CD14-positive monocyte (primary cell): ENCODE measurements at regions of chr12 and their contacts with region 1.

Region 1: DNA sequence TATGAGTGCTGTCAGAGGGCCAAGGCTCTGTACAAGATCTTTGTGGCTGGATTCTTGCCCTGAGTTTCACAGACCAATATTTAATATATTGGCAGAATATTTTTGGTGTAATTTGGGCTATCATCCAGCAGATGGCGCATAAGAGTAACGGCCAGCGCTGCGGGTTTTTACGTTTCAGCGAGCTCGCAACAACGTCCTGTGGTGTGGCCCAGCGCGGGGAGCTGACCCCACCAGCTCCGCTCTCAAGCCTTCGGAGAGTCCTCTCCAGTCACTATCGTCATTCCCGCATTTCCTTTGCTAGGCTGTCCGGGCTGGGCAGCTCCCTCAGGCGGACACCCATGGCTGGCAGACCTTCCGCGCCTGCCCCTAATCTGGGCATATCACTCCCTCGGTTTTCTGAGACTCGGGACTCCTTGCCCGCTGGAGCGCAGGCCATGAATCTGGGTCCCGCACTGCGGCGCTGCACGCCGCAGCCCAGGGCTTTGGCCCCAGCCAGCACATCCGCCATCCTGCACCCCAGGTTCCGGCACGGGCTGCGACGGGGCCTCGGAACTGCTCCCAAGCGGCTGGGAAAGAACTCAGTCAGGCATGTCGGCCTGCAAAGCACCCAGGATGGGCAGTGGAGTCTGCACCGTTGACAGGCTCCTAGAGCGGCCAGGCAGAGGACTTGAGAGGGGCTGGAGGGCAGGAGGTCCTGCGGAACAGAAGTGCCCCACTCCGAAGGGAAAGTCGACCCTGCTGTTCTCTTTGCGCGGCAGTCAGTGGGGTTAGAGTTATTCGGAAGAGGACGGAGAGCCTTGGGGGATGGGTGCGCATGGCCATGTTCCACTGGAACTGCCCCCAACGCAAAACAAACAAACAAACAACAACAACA is 18.4 kb downstream of the OLR1 start:
- DNase-seq: peak; percentile 80 to 86 (median 83)
- H3K4me3 ChIP-seq: peak overlapping the region; percentile 37 to 83 (median 55)
- H3K4me3 Mint-ChIP-seq: peak overlapping the region; percentile 88 to 93
- H3K27ac ChIP-seq: peak overlapping the region; percentile 86
- H3K27ac Mint-ChIP-seq: peak overlapping the region; percentile 94 to 99 (median 98)
- H3K4me1 ChIP-seq: peaks cover 13 to 24% of the 10 kb centered on the region in 2 donors
- H3K4me1 Mint-ChIP-seq: peaks cover 22% of the 10 kb centered on the region
- H3K27me3 ChIP-seq: no peaks in the 10 kb centered on the region
- H3K27me3 Mint-ChIP-seq: peaks cover 0 to 2% (median 2%) of the 10 kb centered on the region in 3 donors
- CTCF ChIP-seq: peak; percentile 77

Region 2: GRCh38 chr12:9948606-9949296 is 204.8 kb before region 1 on chr12:
- intact Hi-C with region 1: no loop called
- DNase-seq: peak; percentile 72 to 87 (median 83)
- H3K4me3 ChIP-seq: peak overlapping the region in 1 of 3 experiments; percentile 57
- H3K4me3 Mint-ChIP-seq: peak overlapping the region in 1 of 2 donors; percentile 2
- H3K27ac ChIP-seq: peak overlapping the region; percentile 22 to 80
- H3K27ac Mint-ChIP-seq: peak overlapping the region; percentile 82 to 91 (median 85)
- H3K4me1 ChIP-seq: peaks cover 63 to 79% of the 10 kb centered on the region in 2 donors
- H3K4me1 Mint-ChIP-seq: peaks cover 72% of the 10 kb centered on the region
- H3K27me3 ChIP-seq: no peaks in the 10 kb centered on the region
- H3K27me3 Mint-ChIP-seq: peaks cover 0 to 3% (median 0%) of the 10 kb centered on the region in 3 donors
- CTCF ChIP-seq: no peak

Region 3: GRCh38 chr12:10170292-10170691 is 16.8 kb after region 1 on chr12:
- intact Hi-C with region 1: loop called in 1 of 2 experiments (anchors 2 kb)
- DNase-seq: no peak
- H3K4me3 ChIP-seq: peak overlapping the region in 1 of 3 experiments; percentile 58
- H3K4me3 Mint-ChIP-seq: peak overlapping the region in 1 of 2 donors; percentile 60
- H3K27ac ChIP-seq: no peak overlapping the region
- H3K27ac Mint-ChIP-seq: peak overlapping the region in 4 of 7 donors; percentile 16 to 79 (median 34)
- H3K4me1 ChIP-seq: peaks cover 50% of the 10 kb centered on the region in 2 donors
- H3K4me1 Mint-ChIP-seq: peaks cover 50% of the 10 kb centered on the region
- H3K27me3 ChIP-seq: no peaks in the 10 kb centered on the region
- H3K27me3 Mint-ChIP-seq: no peaks in the 10 kb centered on the region
- CTCF ChIP-seq: no peak

Region 4: DNA sequence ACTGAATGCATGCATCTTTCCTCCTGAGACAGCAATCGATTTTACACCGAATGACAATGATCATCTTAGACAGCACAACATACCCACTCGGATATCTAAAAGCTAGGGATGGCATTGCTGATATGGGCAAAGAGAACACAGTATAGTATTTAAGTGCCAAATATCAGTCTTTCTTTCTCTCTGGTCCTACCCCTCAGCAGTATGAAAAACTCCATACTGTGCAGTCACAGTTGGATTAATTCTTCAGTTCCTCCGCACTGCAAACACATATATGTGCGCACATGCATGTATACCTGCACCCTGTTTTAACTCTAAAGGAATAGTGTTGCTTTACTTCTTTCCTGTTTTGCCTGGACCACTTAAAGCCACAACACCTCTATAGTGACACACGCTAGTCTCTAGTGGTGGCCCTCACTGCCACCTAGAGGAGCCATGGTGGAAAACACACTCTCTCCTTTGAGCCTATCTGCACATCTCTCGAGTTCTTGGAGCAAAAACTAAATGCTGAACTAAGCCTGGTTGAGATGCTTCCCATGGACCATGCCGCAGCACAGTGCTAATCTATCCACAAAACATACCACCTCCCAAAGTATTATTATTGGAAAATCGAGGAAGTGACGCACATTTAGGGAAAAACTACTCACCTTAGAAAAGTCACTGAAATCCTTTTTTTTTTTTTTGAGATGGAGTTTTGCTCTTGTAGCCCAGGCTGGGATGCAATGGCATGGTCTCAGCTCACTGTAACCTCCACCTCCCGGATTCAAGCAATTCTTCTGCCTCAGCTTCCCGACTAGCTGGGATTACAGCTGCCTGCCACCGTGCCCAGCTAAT is 37.3 kb after region 1 on chr12:
- intact Hi-C with region 1: loop called (anchors 2 kb)
- DNase-seq: peak; percentile 68 to 85 (median 77)
- H3K4me3 ChIP-seq: no peak overlapping the region
- H3K4me3 Mint-ChIP-seq: no peak overlapping the region
- H3K27ac ChIP-seq: no peak overlapping the region
- H3K27ac Mint-ChIP-seq: peak overlapping the region in 1 of 7 donors; percentile 73
- H3K4me1 ChIP-seq: peaks cover 16% of the 10 kb centered on the region in 2 donors
- H3K4me1 Mint-ChIP-seq: peaks cover 25% of the 10 kb centered on the region
- H3K27me3 ChIP-seq: peaks cover 0 to 6% of the 10 kb centered on the region in 2 donors
- H3K27me3 Mint-ChIP-seq: peaks cover 4 to 6% (median 5%) of the 10 kb centered on the region in 3 donors
- CTCF ChIP-seq: peak; percentile 87

Region 5: DNA sequence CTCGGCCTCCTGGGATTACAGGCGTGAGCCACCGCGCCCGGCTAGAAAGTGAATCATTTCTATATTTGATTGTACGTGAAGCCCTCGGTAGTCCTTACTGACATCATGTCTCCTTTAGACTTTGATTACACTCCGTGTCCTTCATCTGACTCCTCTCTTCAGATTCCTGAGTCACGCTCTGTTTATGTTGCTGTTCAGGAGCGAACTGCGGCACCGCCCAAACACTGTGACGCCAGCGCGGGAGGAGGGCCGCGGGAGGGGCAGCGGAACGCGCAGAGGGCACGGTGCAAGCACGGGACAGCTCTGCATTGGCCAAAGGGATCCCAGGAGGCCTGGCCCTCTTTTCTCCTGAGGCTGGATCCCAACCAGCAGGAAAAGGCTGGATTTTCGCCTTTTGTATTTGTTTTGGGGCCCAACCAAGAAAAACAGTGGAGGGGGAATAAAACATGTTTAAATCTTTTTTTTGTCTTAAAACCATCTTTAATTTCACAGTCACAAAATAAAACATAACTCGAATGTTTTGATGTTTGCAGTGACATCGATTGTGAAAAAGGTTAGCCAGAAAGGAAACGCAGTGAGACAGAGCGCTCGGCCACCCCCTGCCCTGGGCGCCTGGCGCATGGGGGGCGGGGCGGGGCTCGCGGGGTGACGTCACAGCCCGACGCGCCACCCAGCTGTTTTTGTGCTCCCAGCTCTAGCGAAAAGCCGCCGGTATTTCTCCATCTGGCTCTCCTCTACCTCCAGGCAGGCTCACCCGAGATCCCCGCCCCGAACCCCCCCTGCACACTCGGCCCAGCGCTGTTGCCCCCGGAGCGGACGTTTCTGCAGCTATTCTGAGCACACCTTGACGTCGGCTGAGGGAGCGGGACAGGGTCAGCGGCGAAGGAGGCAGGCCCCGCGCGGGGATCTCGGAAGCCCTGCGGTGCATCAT is 59.0 kb after region 1 on chr12 and contains the start of gene GABARAPL1:
- intact Hi-C with region 1: loop called in 1 of 2 experiments (anchors 10 kb)
- DNase-seq: peak; percentile 98 to 99 (median 99)
- H3K4me3 ChIP-seq: peak within 1 kb of the TSS; percentile 88 to 95 (median 94)
- H3K4me3 Mint-ChIP-seq: peak within 1 kb of the TSS; percentile 96 to 99
- H3K27ac ChIP-seq: peak within 1 kb of the TSS; percentile 99 to 100
- H3K27ac Mint-ChIP-seq: peak within 1 kb of the TSS; percentile 99 to 100 (median 99)
- H3K4me1 ChIP-seq: peaks cover 18 to 25% of the 10 kb centered on the region in 2 donors
- H3K4me1 Mint-ChIP-seq: peaks cover 17% of the 10 kb centered on the region
- H3K27me3 ChIP-seq: no peaks in the 10 kb centered on the region
- H3K27me3 Mint-ChIP-seq: peaks cover 1 to 6% (median 3%) of the 10 kb centered on the region in 3 donors
- CTCF ChIP-seq: no peak
- polyA plus RNA-seq, gene GABARAPL1: 13.1 to 291 (median 15.5) TPM